Activated B cell treated with CpG ODN at 0.5 μM for 24 hours (primary cell): ENCODE measurements at regions of chr5 and their contacts with region 1.

Region 1: DNA sequence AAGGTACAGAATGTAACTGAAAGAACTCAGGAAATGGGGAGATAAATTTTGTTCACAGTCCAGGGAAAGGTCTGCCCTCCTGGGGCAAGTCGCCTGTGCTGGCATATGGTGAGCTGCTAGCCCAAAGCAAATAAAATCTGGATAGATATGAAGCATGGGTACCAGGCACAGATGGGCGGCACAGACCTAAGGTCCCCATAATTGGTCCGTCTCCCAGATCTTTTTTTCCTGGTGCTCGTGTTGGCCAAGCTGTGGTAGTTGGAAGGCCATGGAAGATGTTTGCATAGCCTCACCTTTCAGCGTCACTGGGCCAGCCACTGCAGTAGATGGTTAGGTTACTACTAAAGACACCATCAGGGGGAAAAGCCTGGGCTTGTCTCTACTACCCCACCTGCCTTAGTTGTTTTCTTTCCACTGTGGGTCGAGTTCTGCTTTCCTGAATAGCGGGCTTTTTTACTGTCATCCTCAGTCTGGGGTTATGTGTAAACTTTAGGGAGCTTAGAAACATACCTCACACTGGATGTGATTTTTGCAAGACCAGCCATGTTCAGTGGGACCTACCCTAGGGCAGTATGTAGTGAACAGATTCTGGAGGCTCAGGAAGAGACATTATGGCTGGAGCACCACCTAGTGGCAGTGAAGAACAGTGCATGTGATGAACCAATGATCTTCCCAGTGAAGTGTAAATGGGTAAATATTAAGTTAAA is 24.2 kb upstream of the GLRX start:
- DNase-seq: peak; percentile 45
- ATAC-seq: peak; percentile 80
- H3K4me3 Mint-ChIP-seq: no peak overlapping the region
- H3K27ac Mint-ChIP-seq: no peak overlapping the region
- H3K4me1 Mint-ChIP-seq: peaks cover 11% of the 10 kb centered on the region
- H3K27me3 Mint-ChIP-seq: no peaks in the 10 kb centered on the region
- CTCF ChIP-seq: peak; percentile 82

Region 2: GRCh38 chr5:95761771-95762651 is 84.7 kb before region 1 on chr5:
- CTCF ChIA-PET with region 1: no interaction called
- POLR2A ChIA-PET with region 1: no interaction called
- intact Hi-C with region 1: no loop called
- DNase-seq: no peak
- ATAC-seq: no peak
- H3K4me3 Mint-ChIP-seq: peak overlapping the region; percentile 15
- H3K27ac Mint-ChIP-seq: peak overlapping the region; percentile 89
- H3K4me1 Mint-ChIP-seq: peaks cover 42% of the 10 kb centered on the region
- H3K27me3 Mint-ChIP-seq: no peaks in the 10 kb centered on the region
- CTCF ChIP-seq: no peak

Region 3: GRCh38 chr5:95794070-95794516 is 52.6 kb before region 1 on chr5:
- CTCF ChIA-PET with region 1: interaction called, 5 read pairs
- POLR2A ChIA-PET with region 1: interaction called, 11 read pairs
- intact Hi-C with region 1: no loop called
- DNase-seq: no peak
- ATAC-seq: no peak
- H3K4me3 Mint-ChIP-seq: no peak overlapping the region
- H3K27ac Mint-ChIP-seq: no peak overlapping the region
- H3K4me1 Mint-ChIP-seq: peaks cover 5% of the 10 kb centered on the region
- H3K27me3 Mint-ChIP-seq: no peaks in the 10 kb centered on the region
- CTCF ChIP-seq: no peak

Region 4: DNA sequence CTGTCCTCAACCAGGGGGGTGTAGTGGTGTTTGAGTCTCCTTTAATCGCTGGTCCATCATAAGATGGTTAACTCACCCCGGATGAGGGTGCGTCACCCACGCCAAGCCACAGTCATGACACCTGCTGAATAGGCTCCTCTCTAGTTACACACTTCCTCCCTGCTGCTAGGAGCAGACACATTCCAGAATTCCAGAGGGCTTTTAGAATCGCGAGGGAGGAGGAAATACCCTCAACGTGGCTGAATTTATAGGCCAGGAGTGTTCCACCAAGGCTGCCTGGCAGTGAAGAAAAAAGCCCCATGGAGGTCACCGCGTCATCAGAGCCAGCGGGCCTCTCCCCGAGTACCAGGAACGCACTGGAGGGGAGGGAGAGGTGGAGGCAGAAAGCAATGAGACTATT is 29.3 kb before region 1 on chr5:
- CTCF ChIA-PET with region 1: interaction called, 10 read pairs
- POLR2A ChIA-PET with region 1: interaction called, 233 read pairs
- intact Hi-C with region 1: loop called (anchors 1 kb)
- DNase-seq: no peak
- ATAC-seq: no peak
- H3K4me3 Mint-ChIP-seq: peak overlapping the region; percentile 78
- H3K27ac Mint-ChIP-seq: peak overlapping the region; percentile 98
- H3K4me1 Mint-ChIP-seq: peaks cover 80% of the 10 kb centered on the region
- H3K27me3 Mint-ChIP-seq: no peaks in the 10 kb centered on the region
- CTCF ChIP-seq: no peak

Region 5: GRCh38 chr5:95835682-95836385 is 10.9 kb before region 1 on chr5:
- CTCF ChIA-PET with region 1: interaction called, 5 read pairs
- POLR2A ChIA-PET with region 1: interaction called, 5 read pairs
- intact Hi-C with region 1: loop called (anchors 1 kb)
- DNase-seq: no peak
- ATAC-seq: no peak
- H3K4me3 Mint-ChIP-seq: peak overlapping the region; percentile 92
- H3K27ac Mint-ChIP-seq: peak overlapping the region; percentile 84
- H3K4me1 Mint-ChIP-seq: peaks cover 55% of the 10 kb centered on the region
- H3K27me3 Mint-ChIP-seq: no peaks in the 10 kb centered on the region
- CTCF ChIP-seq: no peak